Breast epithelium (tissue), 4 donors: ENCODE measurements at regions of chr3 and their contacts with region 1.

Region 1: GRCh38 chr3:67288466-67289106 is 290.5 kb downstream of the KBTBD8 start:
- DNase-seq: no peak
- H3K4me3 ChIP-seq: no peak overlapping the region
- H3K27ac ChIP-seq: no peak overlapping the region
- H3K4me1 ChIP-seq: no peaks in the 10 kb centered on the region
- H3K27me3 ChIP-seq: no peaks in the 10 kb centered on the region
- CTCF ChIP-seq: no peak
- POLR2A ChIP-seq: no peak

Region 2: GRCh38 chr3:66858656-66859381 is 429.8 kb before region 1 on chr3:
- intact Hi-C with region 1: no loop called
- DNase-seq: no peak
- H3K4me3 ChIP-seq: no peak overlapping the region
- H3K27ac ChIP-seq: no peak overlapping the region
- H3K4me1 ChIP-seq: no peaks in the 10 kb centered on the region
- H3K27me3 ChIP-seq: no peaks in the 10 kb centered on the region
- CTCF ChIP-seq: no peak
- POLR2A ChIP-seq: no peak

Region 3: DNA sequence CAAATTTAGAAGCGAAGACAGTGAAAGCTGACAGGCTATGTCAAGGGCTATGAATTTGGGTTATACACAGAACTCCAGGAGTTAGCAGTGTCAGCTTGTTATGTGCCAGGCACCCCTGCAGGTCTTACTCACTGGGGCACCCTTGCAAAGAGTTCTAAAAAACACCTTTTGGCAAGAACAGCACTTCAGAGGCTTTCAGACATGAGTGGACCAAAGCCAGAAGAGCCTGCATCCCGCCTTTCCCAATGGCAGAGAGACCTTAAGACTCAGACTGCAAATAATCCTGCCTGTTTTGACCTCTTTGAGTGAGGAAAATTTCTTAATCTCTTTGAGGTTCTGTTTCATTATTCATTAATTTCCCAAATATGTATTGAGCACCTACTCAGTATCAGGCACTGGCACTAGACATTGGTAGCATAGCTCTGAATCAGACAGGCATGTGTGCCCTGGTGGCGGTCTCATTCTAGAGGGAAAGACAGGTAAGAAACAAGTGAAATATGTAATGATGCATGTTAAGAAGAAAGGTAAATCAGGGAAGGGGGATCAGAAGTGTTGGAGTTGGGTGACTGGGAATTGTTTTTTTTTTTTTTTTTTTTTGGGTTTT is 10.5 kb before region 1 on chr3:
- intact Hi-C with region 1: loop called (anchors 1 kb)
- DNase-seq: no peak
- H3K4me3 ChIP-seq: no peak overlapping the region
- H3K27ac ChIP-seq: no peak overlapping the region
- H3K4me1 ChIP-seq: no peaks in the 10 kb centered on the region
- H3K27me3 ChIP-seq: no peaks in the 10 kb centered on the region
- CTCF ChIP-seq: no peak
- POLR2A ChIP-seq: no peak